Naive thymus-derived CD4-positive, alpha-beta T cell (primary cell): ENCODE measurements at regions of chr1 and their contacts with region 1.

Region 1: GRCh38 chr1:67230539-67230938 is 64.3 kb downstream of the IL23R start:
- DNase-seq: no peak
- ATAC-seq: no peak
- H3K4me3 ChIP-seq: no peak overlapping the region
- H3K4me3 Mint-ChIP-seq: no peak overlapping the region
- H3K27ac ChIP-seq: no peak overlapping the region
- H3K27ac Mint-ChIP-seq: no peak overlapping the region
- H3K4me1 ChIP-seq: no peaks in the 10 kb centered on the region
- H3K4me1 Mint-ChIP-seq: peaks cover 0 to 8% (median 2%) of the 10 kb centered on the region in 7 donors
- H3K27me3 ChIP-seq: no peaks in the 10 kb centered on the region
- H3K27me3 Mint-ChIP-seq: peaks cover 0 to 7% (median 0%) of the 10 kb centered on the region in 5 donors

Region 2: GRCh38 chr1:66725885-66726665 is 504.5 kb before region 1 on chr1:
- CTCF ChIA-PET with region 1: no interaction called
- POLR2A ChIA-PET with region 1: no interaction called
- intact Hi-C with region 1: no loop called
- DNase-seq: peak; percentile 10 to 75 (median 61)
- ATAC-seq: peak; percentile 87
- H3K4me3 ChIP-seq: no peak overlapping the region
- H3K4me3 Mint-ChIP-seq: no peak overlapping the region
- H3K27ac ChIP-seq: no peak overlapping the region
- H3K27ac Mint-ChIP-seq: peak overlapping the region in 1 of 9 donors; percentile 14
- H3K4me1 ChIP-seq: peaks cover 0 to 3% of the 10 kb centered on the region in 2 donors
- H3K4me1 Mint-ChIP-seq: peaks cover 8 to 23% (median 16%) of the 10 kb centered on the region in 7 donors
- H3K27me3 ChIP-seq: peaks cover 0 to 2% of the 10 kb centered on the region in 2 donors
- H3K27me3 Mint-ChIP-seq: peaks cover 9 to 28% (median 13%) of the 10 kb centered on the region in 5 donors

Region 3: GRCh38 chr1:67261680-67262079 is 31.1 kb after region 1 on chr1:
- CTCF ChIA-PET with region 1: no interaction called
- POLR2A ChIA-PET with region 1: no interaction called
- intact Hi-C with region 1: loop called (anchors 1 to 2 kb)
- DNase-seq: peak in 8 of 9 donors; percentile 24 to 67 (median 57)
- ATAC-seq: peak; percentile 52
- H3K4me3 ChIP-seq: no peak overlapping the region
- H3K4me3 Mint-ChIP-seq: peak overlapping the region in 7 of 10 donors; percentile 17 to 73 (median 34)
- H3K27ac ChIP-seq: no peak overlapping the region
- H3K27ac Mint-ChIP-seq: peak overlapping the region in 1 of 9 donors; percentile 8
- H3K4me1 ChIP-seq: peaks cover 17 to 22% of the 10 kb centered on the region in 2 donors
- H3K4me1 Mint-ChIP-seq: peaks cover 12 to 44% (median 31%) of the 10 kb centered on the region in 7 donors
- H3K27me3 ChIP-seq: no peaks in the 10 kb centered on the region
- H3K27me3 Mint-ChIP-seq: no peaks in the 10 kb centered on the region

Region 4: DNA sequence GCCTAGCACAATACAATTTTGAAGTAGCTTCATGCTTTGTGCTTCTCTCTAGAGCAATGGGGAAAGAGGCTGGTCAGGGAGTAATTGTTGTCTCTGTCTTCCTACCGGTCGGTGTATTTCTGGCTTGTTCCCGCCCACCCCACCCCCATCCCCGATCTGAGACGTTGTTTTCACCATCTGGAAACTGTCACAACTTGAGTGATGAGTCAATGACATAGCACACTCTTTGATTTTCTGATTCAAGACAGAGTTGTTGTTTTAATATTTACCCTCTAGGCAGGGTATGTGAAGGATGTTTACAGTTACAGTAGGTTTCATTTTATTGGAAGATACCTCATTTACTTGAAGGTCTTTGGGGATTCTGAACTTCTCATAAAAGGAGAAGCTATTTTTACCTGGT is 84.2 kb after region 1 on chr1:
- CTCF ChIA-PET with region 1: no interaction called
- POLR2A ChIA-PET with region 1: no interaction called
- intact Hi-C with region 1: loop called in 1 of 2 experiments (anchors 2 kb)
- DNase-seq: no peak
- ATAC-seq: peak; percentile 41
- H3K4me3 ChIP-seq: no peak overlapping the region
- H3K4me3 Mint-ChIP-seq: peak overlapping the region in 4 of 10 donors; percentile 9 to 84 (median 34)
- H3K27ac ChIP-seq: no peak overlapping the region
- H3K27ac Mint-ChIP-seq: peak overlapping the region in 1 of 9 donors; percentile 92
- H3K4me1 ChIP-seq: no peaks in the 10 kb centered on the region
- H3K4me1 Mint-ChIP-seq: peaks cover 0 to 51% (median 0%) of the 10 kb centered on the region in 7 donors
- H3K27me3 ChIP-seq: no peaks in the 10 kb centered on the region
- H3K27me3 Mint-ChIP-seq: peaks cover 0 to 2% (median 0%) of the 10 kb centered on the region in 5 donors

Region 5: GRCh38 chr1:67347688-67348472 is 117.3 kb after region 1 on chr1:
- CTCF ChIA-PET with region 1: no interaction called
- POLR2A ChIA-PET with region 1: no interaction called
- intact Hi-C with region 1: loop called in 1 of 2 experiments (anchors 1 kb)
- DNase-seq: no peak
- ATAC-seq: peak; percentile 34
- H3K4me3 ChIP-seq: no peak overlapping the region
- H3K4me3 Mint-ChIP-seq: no peak overlapping the region
- H3K27ac ChIP-seq: no peak overlapping the region
- H3K27ac Mint-ChIP-seq: peak overlapping the region in 1 of 9 donors; percentile 68
- H3K4me1 ChIP-seq: no peaks in the 10 kb centered on the region
- H3K4me1 Mint-ChIP-seq: peaks cover 3 to 36% (median 8%) of the 10 kb centered on the region in 7 donors
- H3K27me3 ChIP-seq: no peaks in the 10 kb centered on the region
- H3K27me3 Mint-ChIP-seq: no peaks in the 10 kb centered on the region

Region 6: GRCh38 chr1:67760030-67760821 is 529.7 kb after region 1 on chr1:
- CTCF ChIA-PET with region 1: no interaction called
- POLR2A ChIA-PET with region 1: no interaction called
- intact Hi-C with region 1: loop called in 1 of 2 experiments (anchors 1 kb)
- DNase-seq: peak; percentile 17 to 64 (median 45)
- ATAC-seq: peak; percentile 73
- H3K4me3 ChIP-seq: no peak overlapping the region
- H3K4me3 Mint-ChIP-seq: no peak overlapping the region
- H3K27ac ChIP-seq: no peak overlapping the region
- H3K27ac Mint-ChIP-seq: no peak overlapping the region
- H3K4me1 ChIP-seq: no peaks in the 10 kb centered on the region
- H3K4me1 Mint-ChIP-seq: no peaks in the 10 kb centered on the region
- H3K27me3 ChIP-seq: peaks cover 0 to 5% of the 10 kb centered on the region in 2 donors
- H3K27me3 Mint-ChIP-seq: peaks cover 18 to 33% (median 24%) of the 10 kb centered on the region in 5 donors